Activated CD4-positive, alpha-beta memory T cell treated with anti-CD3 and anti-CD28 coated beads, Interleukin-2, amount 10 ng/mL, durations not matched to agents 7 days and 5 days (primary cell): ENCODE measurements at regions of chr6 and their contacts with region 1.

Region 1: GRCh38 chr6:96468681-96469224 is 52.9 kb upstream of the UFL1 start:
- DNase-seq: no peak
- H3K4me3 Mint-ChIP-seq: no peak overlapping the region
- H3K27ac Mint-ChIP-seq: no peak overlapping the region
- H3K4me1 Mint-ChIP-seq: peaks cover 37% of the 10 kb centered on the region
- H3K27me3 Mint-ChIP-seq: peaks cover 13% of the 10 kb centered on the region

Region 2: GRCh38 chr6:96499781-96500180 is 31.0 kb after region 1 on chr6:
- CTCF ChIA-PET with region 1: interaction called, 10 read pairs
- POLR2A ChIA-PET with region 1: interaction called, 6 read pairs
- DNase-seq: peak; percentile 81
- H3K4me3 Mint-ChIP-seq: peak overlapping the region; percentile 9
- H3K27ac Mint-ChIP-seq: peak overlapping the region; percentile 80
- H3K4me1 Mint-ChIP-seq: peaks cover 36% of the 10 kb centered on the region
- H3K27me3 Mint-ChIP-seq: peaks cover 5% of the 10 kb centered on the region

Region 3: DNA sequence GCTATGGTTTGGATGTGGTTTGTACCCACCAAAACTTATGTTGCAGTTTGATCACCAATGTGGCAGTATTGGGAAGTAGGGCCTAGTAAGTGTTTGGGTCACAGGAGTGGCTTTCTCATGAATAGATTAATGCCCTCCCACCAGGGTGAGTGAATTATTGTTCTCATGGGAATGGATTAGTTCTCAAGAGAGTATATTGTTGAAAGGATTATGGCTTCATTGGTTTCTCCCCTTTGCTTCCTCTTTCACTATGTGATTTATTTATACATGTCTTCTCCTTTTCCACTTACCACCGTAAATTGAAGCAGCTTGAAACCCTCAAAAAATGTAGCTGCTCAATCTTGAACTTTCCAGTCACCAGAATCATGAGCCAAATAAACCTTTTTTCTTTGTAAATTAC is 63.6 kb after region 1 on chr6:
- CTCF ChIA-PET with region 1: no interaction called
- POLR2A ChIA-PET with region 1: no interaction called
- DNase-seq: no peak
- H3K4me3 Mint-ChIP-seq: no peak overlapping the region
- H3K27ac Mint-ChIP-seq: no peak overlapping the region
- H3K4me1 Mint-ChIP-seq: peaks cover 12% of the 10 kb centered on the region
- H3K27me3 Mint-ChIP-seq: no peaks in the 10 kb centered on the region